Ascending aorta (tissue), 2 donors: ENCODE measurements at regions of chr12 and their contacts with region 1.

Region 1: DNA sequence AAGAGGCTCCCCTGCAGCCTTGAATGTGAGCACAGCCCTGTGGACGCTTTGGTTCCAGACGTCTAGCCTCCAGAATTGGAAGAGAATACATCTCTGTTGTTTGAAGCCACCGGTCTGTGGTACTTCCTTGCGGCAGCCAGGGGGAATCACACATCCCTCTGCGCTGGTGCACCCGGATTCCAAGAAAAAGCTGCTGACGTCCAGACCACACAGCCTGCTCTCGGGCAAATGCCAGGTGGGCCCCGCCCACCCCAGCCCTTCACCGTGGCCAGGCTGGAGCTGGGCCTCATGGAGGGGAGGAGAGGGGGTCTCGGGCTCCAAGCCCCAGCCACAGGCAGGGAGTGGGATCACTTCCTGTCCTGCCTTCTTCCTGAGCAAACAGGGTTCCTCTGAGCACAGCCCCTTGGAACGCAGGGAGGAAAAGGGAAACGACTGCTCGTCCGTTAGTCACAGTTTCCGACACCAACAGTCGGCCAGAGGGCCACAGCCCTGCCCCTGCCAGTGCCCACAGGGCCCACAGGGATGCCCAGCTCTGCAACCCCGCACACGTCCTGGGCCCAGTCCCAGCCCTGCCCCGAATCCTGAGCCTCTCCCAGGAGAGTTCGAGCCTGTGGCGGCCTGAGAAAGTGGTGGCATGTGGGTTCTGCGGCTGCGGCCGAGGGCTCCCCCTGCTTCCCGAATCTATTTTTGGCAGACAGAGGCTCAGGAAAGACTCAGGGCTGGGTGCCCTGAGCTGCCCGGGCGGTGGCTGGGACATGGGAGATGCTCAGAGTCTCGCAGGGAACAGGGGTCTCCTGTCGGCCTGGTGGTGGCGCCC is 85.3 kb downstream of the RFLNA start:
- DNase-seq: peak; percentile 73 to 96
- H3K4me3 ChIP-seq: peak overlapping the region in 1 of 2 donors; percentile 11
- H3K27ac ChIP-seq: peak overlapping the region; percentile 89 to 90
- H3K4me1 ChIP-seq: peaks cover 15 to 38% of the 10 kb centered on the region in 2 donors
- H3K27me3 ChIP-seq: no peaks in the 10 kb centered on the region
- CTCF ChIP-seq: peak; percentile 59 to 79 (median 67)

Region 2: GRCh38 chr12:124369055-124369900 is 10.9 kb before region 1 on chr12:
- intact Hi-C with region 1: loop called (anchors 1 kb)
- DNase-seq: peak; percentile 61 to 95
- H3K4me3 ChIP-seq: peak overlapping the region in 1 of 2 donors; percentile 37
- H3K27ac ChIP-seq: peak overlapping the region; percentile 83 to 87
- H3K4me1 ChIP-seq: peaks cover 26 to 34% of the 10 kb centered on the region in 2 donors
- H3K27me3 ChIP-seq: no peaks in the 10 kb centered on the region
- CTCF ChIP-seq: peak; percentile 46 to 73 (median 49)

Region 3: DNA sequence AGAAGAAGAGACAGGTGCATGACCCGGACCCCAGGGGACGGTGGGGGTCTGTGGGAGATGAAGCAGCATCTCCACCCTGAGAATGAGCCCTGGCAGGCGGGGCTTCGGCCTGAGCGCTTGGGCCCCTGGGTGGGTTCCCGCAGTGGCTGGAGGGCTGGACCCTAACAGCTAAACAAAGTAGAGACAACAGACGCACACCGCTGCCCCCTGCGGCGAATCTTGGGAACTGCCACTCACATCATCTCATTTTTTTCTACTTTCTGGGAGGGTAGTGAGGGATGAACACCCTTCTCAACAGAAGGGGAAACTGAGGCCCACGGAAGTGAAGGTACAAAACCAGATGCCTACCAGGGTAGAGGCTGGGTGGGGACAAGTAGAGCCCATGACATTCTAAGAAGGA is 19.5 kb after region 1 on chr12:
- intact Hi-C with region 1: no loop called
- DNase-seq: no peak
- H3K4me3 ChIP-seq: no peak overlapping the region
- H3K27ac ChIP-seq: peak overlapping the region; percentile 47 to 90
- H3K4me1 ChIP-seq: peaks cover 16 to 53% of the 10 kb centered on the region in 2 donors
- H3K27me3 ChIP-seq: no peaks in the 10 kb centered on the region
- CTCF ChIP-seq: peak; percentile 21 to 66 (median 58)

Region 4: GRCh38 chr12:124459852-124460645 is 79.9 kb after region 1 on chr12:
- intact Hi-C with region 1: no loop called
- DNase-seq: no peak
- H3K4me3 ChIP-seq: no peak overlapping the region
- H3K27ac ChIP-seq: no peak overlapping the region
- H3K4me1 ChIP-seq: peaks cover 23 to 24% of the 10 kb centered on the region in 2 donors
- H3K27me3 ChIP-seq: no peaks in the 10 kb centered on the region
- CTCF ChIP-seq: no peak